ENCODE measurements at regions of chr12 and their contacts with region 1.

Region 1: GRCh38 chr12:122081697-122082221 is 3.2 kb downstream of the MLXIP start:
- DNase-seq: peak; percentile 64
- H3K4me3 Mint-ChIP-seq: peak overlapping the region; percentile 92
- H3K27ac Mint-ChIP-seq: peak overlapping the region; percentile 91
- H3K4me1 Mint-ChIP-seq: peaks cover 67% of the 10 kb centered on the region
- H3K27me3 Mint-ChIP-seq: no peaks in the 10 kb centered on the region

Region 2: DNA sequence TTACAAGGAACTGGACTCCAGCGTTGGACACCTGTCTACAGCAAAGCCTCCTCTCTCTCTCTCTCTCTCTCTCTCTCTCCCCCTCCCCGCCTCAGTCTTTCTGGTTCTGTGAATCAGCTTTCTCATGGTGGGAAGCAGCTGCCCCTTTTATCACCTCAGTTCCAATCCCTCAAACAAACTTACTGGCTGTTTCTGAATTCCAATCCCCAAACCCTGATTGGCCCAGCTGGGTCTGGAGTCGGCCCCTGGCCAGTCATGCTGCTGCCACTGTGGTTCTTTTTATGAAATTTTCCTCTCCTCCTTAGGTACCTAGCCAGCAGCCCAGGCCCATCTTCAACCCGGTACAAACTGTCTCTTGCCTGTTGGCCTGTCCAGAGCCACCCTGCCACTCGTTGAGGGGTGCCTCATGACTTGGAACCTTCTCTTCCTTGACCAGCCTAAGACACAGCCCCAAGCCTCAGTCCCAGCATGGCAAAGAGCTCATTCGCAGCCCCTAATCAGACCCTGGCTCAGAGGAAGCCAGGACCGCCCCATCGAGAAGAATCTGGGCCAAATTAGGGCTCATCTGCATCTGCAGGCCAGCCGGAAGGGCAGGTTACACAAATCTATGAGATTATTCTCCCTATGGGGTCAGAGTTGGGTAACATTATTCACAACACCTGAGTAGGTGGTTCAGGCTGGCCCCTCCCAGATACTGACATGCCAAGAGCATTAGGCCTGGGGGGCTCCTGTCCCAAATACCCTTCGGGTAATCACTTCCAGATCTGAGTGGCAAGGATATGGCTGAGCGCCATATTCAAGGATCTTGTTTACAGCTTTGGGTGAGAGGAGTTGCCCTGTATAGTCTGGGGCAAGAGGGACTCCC is 402.8 kb before region 1 on chr12:
- CTCF ChIA-PET with region 1: interaction called, 10 read pairs
- POLR2A ChIA-PET with region 1: no interaction called
- DNase-seq: no peak
- H3K4me3 Mint-ChIP-seq: peak overlapping the region; percentile 10
- H3K27ac Mint-ChIP-seq: peak overlapping the region; percentile 80
- H3K4me1 Mint-ChIP-seq: peaks cover 26% of the 10 kb centered on the region
- H3K27me3 Mint-ChIP-seq: no peaks in the 10 kb centered on the region

Region 3: GRCh38 chr12:122061253-122061652 is 20.5 kb before region 1 on chr12:
- CTCF ChIA-PET with region 1: no interaction called
- POLR2A ChIA-PET with region 1: no interaction called
- DNase-seq: no peak
- H3K4me3 Mint-ChIP-seq: no peak overlapping the region
- H3K27ac Mint-ChIP-seq: no peak overlapping the region
- H3K4me1 Mint-ChIP-seq: peaks cover 15% of the 10 kb centered on the region
- H3K27me3 Mint-ChIP-seq: no peaks in the 10 kb centered on the region

Region 4: DNA sequence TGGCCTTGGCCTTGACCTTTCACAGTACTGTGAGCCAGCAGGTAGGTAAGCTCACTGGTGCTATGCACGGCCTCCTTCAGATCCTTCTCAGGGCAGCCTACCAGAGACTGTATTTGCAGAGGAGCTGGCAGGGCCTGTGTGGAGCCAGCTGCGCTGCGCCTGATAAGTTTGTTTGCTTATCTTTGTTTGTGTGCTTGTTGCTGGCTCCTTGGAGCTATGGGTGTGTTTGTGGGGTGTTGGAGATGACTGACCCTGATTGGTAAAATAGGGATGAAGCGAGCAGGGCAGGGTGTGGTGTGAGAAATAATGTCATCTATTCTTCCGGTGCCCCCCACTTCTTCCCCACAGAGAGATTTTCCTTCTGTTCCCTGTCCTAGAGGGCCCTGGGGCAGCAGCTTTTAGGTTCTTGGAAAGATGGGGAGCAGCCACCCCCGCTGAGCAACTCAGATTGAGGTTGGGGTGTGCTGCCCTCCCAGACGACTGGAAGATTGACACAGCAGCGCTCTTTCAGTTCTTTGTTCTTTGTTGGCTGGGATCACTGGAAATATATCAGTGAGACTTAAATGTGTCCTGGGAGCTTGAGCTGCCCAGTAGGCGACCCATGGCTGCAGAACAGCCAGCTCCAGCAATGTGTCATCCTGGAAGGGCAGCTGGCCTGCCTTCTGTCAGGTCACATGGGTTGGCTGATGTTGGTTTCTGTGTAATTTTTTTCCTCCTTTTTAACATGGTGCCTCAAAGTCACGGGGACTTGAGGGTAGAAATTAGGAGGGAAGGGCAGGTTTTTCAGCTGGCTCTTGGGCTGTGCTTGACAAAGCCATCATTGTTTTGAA is 16.4 kb after region 1 on chr12:
- CTCF ChIA-PET with region 1: interaction called, 13 read pairs
- POLR2A ChIA-PET with region 1: interaction called, 3 read pairs
- DNase-seq: no peak
- H3K4me3 Mint-ChIP-seq: no peak overlapping the region
- H3K27ac Mint-ChIP-seq: peak overlapping the region; percentile 71
- H3K4me1 Mint-ChIP-seq: peaks cover 55% of the 10 kb centered on the region
- H3K27me3 Mint-ChIP-seq: no peaks in the 10 kb centered on the region

Region 5: DNA sequence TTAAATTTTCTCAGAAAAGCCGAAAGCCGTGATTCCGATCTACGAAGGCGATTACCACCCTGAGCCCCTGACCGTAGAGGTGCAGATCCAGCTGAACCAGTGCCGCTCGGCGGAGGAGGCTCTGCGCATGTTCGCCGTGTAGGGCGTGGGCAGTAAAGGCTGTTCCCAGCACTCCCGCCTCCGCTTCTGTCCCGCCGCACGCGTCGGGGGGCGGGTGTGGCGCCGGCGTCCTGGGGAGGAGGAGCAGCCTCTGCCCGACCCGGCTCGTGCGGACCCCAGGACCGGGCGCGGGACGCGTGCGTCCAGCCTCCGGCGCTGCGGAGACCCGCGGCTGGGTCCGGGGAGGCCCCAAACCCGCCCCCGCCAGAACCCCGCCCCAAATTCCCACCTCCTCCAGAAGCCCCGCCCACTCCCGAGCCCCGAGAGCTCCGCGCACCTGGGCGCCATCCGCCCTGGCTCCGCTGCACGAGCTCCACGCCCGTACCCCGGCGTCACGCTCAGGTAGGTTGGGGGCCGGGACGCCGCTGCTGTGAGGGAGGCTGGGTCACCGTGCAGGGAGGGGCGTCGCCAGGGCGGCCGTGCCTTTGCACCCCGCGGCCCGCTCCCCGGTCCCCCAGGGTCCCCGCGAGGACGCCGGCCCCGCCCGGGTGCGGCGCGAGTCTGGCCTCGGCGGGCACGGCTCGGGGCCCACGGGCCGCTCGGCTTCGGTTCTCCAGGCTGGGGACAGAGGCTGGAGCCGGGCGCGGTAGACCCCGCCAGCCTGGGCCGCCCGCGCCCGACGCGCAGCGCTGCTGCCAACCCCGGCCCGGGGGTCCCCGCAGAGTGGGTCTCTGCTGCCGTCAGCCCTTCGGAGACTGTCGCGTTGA is 121.8 kb after region 1 on chr12 and contains the start of gene B3GNT4:
- CTCF ChIA-PET with region 1: no interaction called
- POLR2A ChIA-PET with region 1: no interaction called
- DNase-seq: peak; percentile 66
- H3K4me3 Mint-ChIP-seq: peak within 1 kb of the TSS; percentile 72
- H3K27ac Mint-ChIP-seq: no peak within 1 kb of the TSS
- H3K4me1 Mint-ChIP-seq: peaks cover 13% of the 10 kb centered on the region
- H3K27me3 Mint-ChIP-seq: peaks cover 31% of the 10 kb centered on the region
- total RNA-seq, gene B3GNT4: 0.50 to 0.71 TPM